ENCODE measurements at regions of chr19 and their contacts with region 1.

Region 1: GRCh38 chr19:43799502-43800142 is 2.6 kb downstream of the LYPD5 start:
- DNase-seq: no peak
- H3K4me3 ChIP-seq: peak overlapping the region in 1 of 3 experiments; percentile 76
- H3K4me3 Mint-ChIP-seq: peak overlapping the region; percentile 85 to 89
- H3K27ac ChIP-seq: no peak overlapping the region
- H3K27ac Mint-ChIP-seq: peak overlapping the region in 2 of 7 donors; percentile 55 to 66
- H3K4me1 ChIP-seq: peaks cover 11% of the 10 kb centered on the region in 2 donors
- H3K4me1 Mint-ChIP-seq: peaks cover 15% of the 10 kb centered on the region
- H3K27me3 ChIP-seq: peaks cover 0 to 5% of the 10 kb centered on the region in 2 donors
- H3K27me3 Mint-ChIP-seq: peaks cover 3 to 40% (median 17%) of the 10 kb centered on the region in 3 donors
- CTCF ChIP-seq: no peak

Region 2: DNA sequence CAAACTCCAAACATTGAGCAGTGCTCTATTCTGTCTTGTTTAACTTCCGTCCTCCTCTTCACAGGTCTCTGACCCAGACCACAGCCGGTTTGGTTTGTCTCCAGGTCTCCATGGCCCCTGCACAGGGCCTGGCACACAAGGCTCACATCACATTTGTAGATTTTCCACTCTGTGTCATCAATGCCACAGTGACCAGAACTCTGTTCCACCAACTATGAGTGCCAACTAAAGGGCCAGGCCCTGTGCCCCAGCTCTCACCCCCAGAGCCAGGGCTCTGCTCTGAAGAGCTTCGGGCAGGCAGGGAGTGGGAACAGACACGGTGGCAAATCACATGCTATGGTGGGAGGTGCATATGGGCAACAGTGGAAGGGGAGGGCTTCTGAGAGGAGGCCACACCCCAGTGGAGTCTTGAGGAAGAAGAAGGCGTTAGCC is 60.8 kb before region 1 on chr19:
- intact Hi-C with region 1: loop called in 1 of 2 experiments (anchors 5 kb)
- DNase-seq: no peak
- H3K4me3 ChIP-seq: no peak overlapping the region
- H3K4me3 Mint-ChIP-seq: no peak overlapping the region
- H3K27ac ChIP-seq: peak overlapping the region in 1 of 2 donors; percentile 51
- H3K27ac Mint-ChIP-seq: peak overlapping the region in 2 of 7 donors; percentile 24 to 28
- H3K4me1 ChIP-seq: peaks cover 1% of the 10 kb centered on the region in 2 donors
- H3K4me1 Mint-ChIP-seq: peaks cover 6% of the 10 kb centered on the region
- H3K27me3 ChIP-seq: no peaks in the 10 kb centered on the region
- H3K27me3 Mint-ChIP-seq: no peaks in the 10 kb centered on the region
- CTCF ChIP-seq: no peak

Region 3: GRCh38 chr19:43928820-43929219 is 129.2 kb after region 1 on chr19:
- intact Hi-C with region 1: no loop called
- DNase-seq: no peak
- H3K4me3 ChIP-seq: no peak overlapping the region
- H3K4me3 Mint-ChIP-seq: no peak overlapping the region
- H3K27ac ChIP-seq: no peak overlapping the region
- H3K27ac Mint-ChIP-seq: no peak overlapping the region
- H3K4me1 ChIP-seq: peaks cover 2% of the 10 kb centered on the region in 2 donors
- H3K4me1 Mint-ChIP-seq: peaks cover 6% of the 10 kb centered on the region
- H3K27me3 ChIP-seq: no peaks in the 10 kb centered on the region
- H3K27me3 Mint-ChIP-seq: peaks cover 0 to 2% (median 1%) of the 10 kb centered on the region in 3 donors
- CTCF ChIP-seq: no peak

Measured in CD14-positive monocyte (primary cell).